ENCODE measurements at regions of chr14 and their contacts with region 1.

Region 1: DNA sequence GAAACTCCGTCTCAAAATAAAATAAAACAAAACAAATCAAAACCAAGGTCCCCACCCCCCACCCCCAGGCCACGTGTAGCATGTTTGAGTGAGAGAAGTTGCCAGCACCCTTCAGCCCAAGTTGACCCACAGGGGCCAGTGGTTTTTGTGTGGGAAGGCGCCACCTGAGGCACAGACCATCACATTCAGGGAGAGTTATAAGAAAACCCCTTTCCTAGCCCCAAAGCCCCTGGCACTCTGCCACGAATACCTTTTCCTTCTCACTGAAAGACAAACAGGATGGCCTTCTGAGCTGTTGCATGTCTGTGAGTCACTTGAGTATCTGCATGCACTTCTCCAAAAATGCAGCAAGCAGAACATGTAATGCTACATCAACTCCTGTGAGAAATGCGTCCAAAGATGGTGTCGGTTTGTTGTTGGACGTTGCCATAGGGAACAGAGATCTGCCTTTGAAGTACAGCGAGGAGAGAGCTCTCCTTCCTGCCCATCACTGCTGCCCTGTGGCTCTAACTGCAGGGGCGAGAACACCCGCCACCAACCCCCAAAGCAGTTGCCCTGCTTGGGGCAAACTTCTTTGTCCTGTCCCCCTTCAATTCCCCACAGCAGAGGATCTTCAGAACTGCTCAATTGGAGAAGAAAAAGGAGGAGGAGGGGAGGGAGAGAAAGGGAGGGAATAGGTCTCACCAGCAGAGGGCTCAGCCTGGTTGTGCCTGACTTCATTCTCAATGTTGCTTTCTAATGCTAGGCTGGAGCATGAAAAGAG is 2.7 kb upstream of the TRAF3 start:
- DNase-seq: peak; percentile 29 to 70 (median 49)
- ATAC-seq: peak; percentile 78
- H3K4me3 ChIP-seq: no peak overlapping the region
- H3K27ac ChIP-seq: no peak overlapping the region; the same call in 2 of the 3 replicates
- H3K4me1 ChIP-seq: peaks cover 19 to 37% of the 10 kb centered on the region in 2 experiments; a peak in 4 of 5 replicates
- H3K27me3 ChIP-seq: no peaks in the 10 kb centered on the region
- CTCF ChIP-seq: peak; percentile 57 to 73 (median 72)
- EP300 ChIP-seq: no peak
- POLR2A ChIP-seq: no peak
- RAD21 ChIP-seq: peak; percentile 36 to 56; a peak in 3 of 4 replicates

Region 2: GRCh38 chr14:102694530-102695166 is 79.9 kb before region 1 on chr14:
- CTCF ChIA-PET with region 1: no interaction called
- POLR2A ChIA-PET with region 1: interaction called, 3 read pairs
- in situ Hi-C with region 1: no loop called
- intact Hi-C with region 1: loop called (anchors 5 kb)
- DNase-seq: peak; percentile 54 to 73 (median 55)
- ATAC-seq: peak; percentile 77
- H3K4me3 ChIP-seq: no peak overlapping the region
- H3K27ac ChIP-seq: no peak overlapping the region
- H3K4me1 ChIP-seq: peaks cover 10 to 20% of the 10 kb centered on the region in 2 experiments; a peak in 3 of 5 replicates
- H3K27me3 ChIP-seq: no peaks in the 10 kb centered on the region
- CTCF ChIP-seq: peak; percentile 37 to 63 (median 48); a peak in 5 of 6 replicates
- EP300 ChIP-seq: no peak
- POLR2A ChIP-seq: no peak
- RAD21 ChIP-seq: peak; percentile 48; a peak in 3 of 4 replicates

Region 3: GRCh38 chr14:102917469-102918211 is 143.1 kb after region 1 on chr14:
- CTCF ChIA-PET with region 1: no interaction called
- POLR2A ChIA-PET with region 1: no interaction called
- in situ Hi-C with region 1: no loop called
- intact Hi-C with region 1: loop called (anchors 2 kb)
- DNase-seq: peak; percentile 55 to 72 (median 58)
- ATAC-seq: peak; percentile 72
- H3K4me3 ChIP-seq: no peak overlapping the region
- H3K27ac ChIP-seq: no peak overlapping the region
- H3K4me1 ChIP-seq: peaks cover 0 to 16% of the 10 kb centered on the region in 2 experiments; a peak in 2 of 5 replicates
- H3K27me3 ChIP-seq: peaks cover 0 to 8% of the 10 kb centered on the region in 2 experiments; a peak in 1 of 5 replicates
- CTCF ChIP-seq: peak; percentile 68 to 81 (median 69)
- EP300 ChIP-seq: no peak
- POLR2A ChIP-seq: no peak
- RAD21 ChIP-seq: peak; percentile 48 to 82

Region 4: GRCh38 chr14:103014466-103015319 is 240.1 kb after region 1 on chr14:
- CTCF ChIA-PET with region 1: no interaction called
- POLR2A ChIA-PET with region 1: no interaction called
- in situ Hi-C with region 1: no loop called
- intact Hi-C with region 1: no loop called
- DNase-seq: peak in 1 of 4 experiments; percentile 21
- ATAC-seq: 0 out of 3 replicates have a peak, but pooled peaks have one; percentile 29
- H3K4me3 ChIP-seq: no peak overlapping the region
- H3K27ac ChIP-seq: no peak overlapping the region
- H3K4me1 ChIP-seq: peaks cover 14 to 25% of the 10 kb centered on the region in 2 experiments
- H3K27me3 ChIP-seq: no peaks in the 10 kb centered on the region
- CTCF ChIP-seq: no peak
- EP300 ChIP-seq: no peak
- POLR2A ChIP-seq: no peak
- RAD21 ChIP-seq: no peak

Measured in K562 (cell line).